Activated CD8-positive, alpha-beta memory T cell treated with anti-CD3 and anti-CD28 coated beads, Interleukin-2, amount 10 ng/mL, durations not matched to agents 7 days and 5 days (primary cell): ENCODE measurements at regions of chr15 and their contacts with region 1.

Region 1: DNA sequence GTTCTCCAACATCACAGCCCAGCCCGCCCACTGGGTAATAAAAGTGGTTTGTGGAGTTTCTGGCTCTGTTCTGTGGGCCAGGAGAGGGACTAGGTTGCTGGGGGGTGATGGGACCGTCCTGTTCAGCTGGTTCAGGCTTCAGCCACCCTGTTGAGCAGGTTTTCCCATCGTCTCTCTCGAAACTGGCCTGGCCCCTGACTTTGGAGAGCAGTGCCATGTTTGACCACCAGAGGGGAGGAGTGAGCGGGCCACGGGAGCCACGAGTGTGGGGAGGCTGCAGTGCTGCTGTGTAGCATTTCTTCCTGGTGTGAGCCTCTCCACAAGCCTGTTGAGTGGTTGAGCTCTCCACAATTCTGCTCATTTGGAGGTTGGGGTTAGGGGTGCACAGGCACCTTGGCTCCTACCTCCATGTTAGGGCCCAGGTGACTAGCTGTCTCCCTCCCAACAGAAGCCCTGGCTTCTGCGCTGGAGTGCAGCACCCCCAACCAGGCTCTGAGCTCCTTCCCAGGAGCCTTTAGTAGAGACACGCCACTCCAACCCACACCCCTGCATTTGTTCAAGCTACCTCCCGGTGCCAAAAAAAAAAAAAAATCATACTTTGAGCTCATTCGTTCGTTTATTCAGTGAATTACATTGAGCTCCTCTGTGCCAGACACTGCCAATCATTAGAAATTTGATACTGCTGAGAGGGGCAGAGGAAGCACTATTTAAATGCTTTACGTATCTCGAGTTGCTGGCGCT is 13.9 kb downstream of the SPINT1 start:
- DNase-seq: peak; percentile 89
- ATAC-seq: peak; percentile 91
- H3K4me3 Mint-ChIP-seq: no peak overlapping the region
- H3K27ac Mint-ChIP-seq: no peak overlapping the region
- H3K4me1 Mint-ChIP-seq: peaks cover 20% of the 10 kb centered on the region
- H3K27me3 Mint-ChIP-seq: peaks cover 6% of the 10 kb centered on the region

Region 2: DNA sequence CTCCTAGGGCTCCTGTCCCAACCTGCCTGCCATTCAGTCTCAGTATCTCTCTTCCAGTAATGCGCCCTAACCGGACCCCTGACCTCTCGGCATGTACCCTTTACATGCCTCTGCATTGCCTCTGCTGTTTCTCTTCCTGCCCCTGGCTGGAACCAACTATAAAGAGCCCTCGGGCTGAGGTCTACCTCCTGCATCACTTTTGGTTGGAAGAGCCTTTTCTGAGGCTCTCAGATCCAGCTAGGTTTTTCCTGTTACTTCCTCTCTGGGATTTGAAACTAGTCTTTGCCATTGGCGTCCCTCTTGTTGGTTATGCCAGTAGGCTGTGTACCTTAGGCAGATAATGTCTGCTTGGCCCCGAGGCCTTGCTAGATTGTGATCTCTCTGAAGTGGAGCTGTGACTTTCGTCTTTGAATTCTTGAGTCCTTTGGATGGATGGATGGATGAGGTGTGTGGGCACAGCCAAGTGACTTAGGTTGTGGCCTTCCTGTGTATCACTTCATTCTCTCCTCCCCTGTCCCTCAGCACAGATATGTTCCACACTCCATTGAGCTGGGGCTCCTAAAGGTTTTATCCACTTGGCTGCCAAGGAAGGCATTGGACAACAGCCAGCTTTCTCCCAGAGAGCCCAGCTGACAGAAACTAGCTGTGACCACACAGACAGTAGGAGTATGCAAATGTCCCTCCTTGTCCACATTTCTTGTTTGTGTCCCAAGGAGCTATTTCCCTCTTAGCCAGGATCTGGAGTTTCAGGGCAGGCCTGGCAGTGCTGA is 42.7 kb before region 1 on chr15:
- CTCF ChIA-PET with region 1: interaction called, 10 read pairs
- DNase-seq: no peak
- ATAC-seq: no peak
- H3K4me3 Mint-ChIP-seq: no peak overlapping the region
- H3K27ac Mint-ChIP-seq: no peak overlapping the region
- H3K4me1 Mint-ChIP-seq: no peaks in the 10 kb centered on the region
- H3K27me3 Mint-ChIP-seq: peaks cover 2% of the 10 kb centered on the region

Region 3: GRCh38 chr15:40873625-40874561 is 16.1 kb after region 1 on chr15 and contains the start of gene RHOV:
- CTCF ChIA-PET with region 1: interaction called, 180 read pairs
- DNase-seq: peak; percentile 56
- ATAC-seq: peak; percentile 84
- H3K4me3 Mint-ChIP-seq: peak within 1 kb of the TSS; percentile 57
- H3K27ac Mint-ChIP-seq: no peak within 1 kb of the TSS
- H3K4me1 Mint-ChIP-seq: peaks cover 11% of the 10 kb centered on the region
- H3K27me3 Mint-ChIP-seq: peaks cover 18% of the 10 kb centered on the region
- total RNA-seq, gene RHOV: not detected

Region 4: GRCh38 chr15:40886586-40886985 is 28.8 kb after region 1 on chr15:
- CTCF ChIA-PET with region 1: interaction called, 223 read pairs
- DNase-seq: no peak
- ATAC-seq: no peak
- H3K4me3 Mint-ChIP-seq: no peak overlapping the region
- H3K27ac Mint-ChIP-seq: no peak overlapping the region
- H3K4me1 Mint-ChIP-seq: peaks cover 17% of the 10 kb centered on the region
- H3K27me3 Mint-ChIP-seq: peaks cover 2% of the 10 kb centered on the region

Region 5: GRCh38 chr15:40906091-40906990 is 48.6 kb after region 1 on chr15:
- CTCF ChIA-PET with region 1: interaction called, 406 read pairs
- DNase-seq: peak; percentile 82
- ATAC-seq: peak; percentile 87
- H3K4me3 Mint-ChIP-seq: peak overlapping the region; percentile 64
- H3K27ac Mint-ChIP-seq: peak overlapping the region; percentile 41
- H3K4me1 Mint-ChIP-seq: peaks cover 28% of the 10 kb centered on the region
- H3K27me3 Mint-ChIP-seq: no peaks in the 10 kb centered on the region